ENCODE measurements at regions of chr12 and their contacts with region 1.

Region 1: GRCh38 chr12:48165094-48165981 is 8.0 kb upstream of the ASB8 start:
- DNase-seq: peak in 4 of 7 donors; percentile 28 to 59 (median 48)
- H3K4me3 ChIP-seq: no peak overlapping the region
- H3K27ac ChIP-seq: no peak overlapping the region
- H3K4me1 ChIP-seq: no peaks in the 10 kb centered on the region
- H3K27me3 ChIP-seq: no peaks in the 10 kb centered on the region
- CTCF ChIP-seq: peak; percentile 85 to 95 (median 90)
- POLR2A ChIP-seq: no peak

Region 2: DNA sequence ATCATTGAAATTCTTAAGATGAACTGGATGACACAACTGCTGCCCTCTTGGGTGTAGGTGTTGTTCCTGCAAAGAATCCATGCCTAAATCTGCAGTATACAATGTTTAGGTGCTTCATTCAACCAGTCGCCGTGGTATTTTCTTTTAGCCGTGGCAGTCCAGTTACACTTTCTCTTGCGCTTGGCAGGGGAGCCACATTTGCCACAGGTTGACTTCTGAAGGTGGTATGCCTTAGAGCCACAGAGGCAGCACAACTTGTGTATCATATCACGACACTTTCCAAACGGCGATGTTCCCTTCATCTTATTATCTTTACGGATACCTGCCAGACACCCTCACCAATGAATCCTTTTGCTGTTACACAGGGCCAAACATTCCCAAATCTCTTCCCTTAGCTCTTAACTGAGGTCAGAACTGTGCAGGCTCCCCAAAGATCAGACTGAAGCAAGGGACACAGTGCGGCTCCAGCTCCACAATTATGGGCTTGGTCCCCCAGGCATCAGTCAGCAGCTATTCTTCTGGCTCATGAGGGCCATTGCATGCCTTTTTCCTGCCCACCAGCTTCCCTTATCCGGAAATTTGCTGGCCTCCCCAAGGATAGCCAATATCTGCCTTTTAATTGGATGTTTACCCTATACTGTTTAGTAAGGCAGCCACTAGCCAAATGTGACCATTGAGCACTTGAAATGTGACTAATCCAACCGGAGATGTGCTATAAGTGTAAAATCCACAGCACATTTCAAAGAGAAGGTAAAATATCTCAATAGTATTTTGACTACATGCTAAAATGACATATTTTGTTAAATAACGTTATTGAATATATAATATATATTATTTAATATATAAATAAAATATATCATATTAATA is 110.2 kb before region 1 on chr12:
- intact Hi-C with region 1: no loop called
- DNase-seq: no peak
- H3K4me3 ChIP-seq: no peak overlapping the region
- H3K27ac ChIP-seq: no peak overlapping the region
- H3K4me1 ChIP-seq: peaks cover 0 to 6% of the 10 kb centered on the region in 2 donors
- H3K27me3 ChIP-seq: no peaks in the 10 kb centered on the region
- CTCF ChIP-seq: no peak
- POLR2A ChIP-seq: no peak

Region 3: DNA sequence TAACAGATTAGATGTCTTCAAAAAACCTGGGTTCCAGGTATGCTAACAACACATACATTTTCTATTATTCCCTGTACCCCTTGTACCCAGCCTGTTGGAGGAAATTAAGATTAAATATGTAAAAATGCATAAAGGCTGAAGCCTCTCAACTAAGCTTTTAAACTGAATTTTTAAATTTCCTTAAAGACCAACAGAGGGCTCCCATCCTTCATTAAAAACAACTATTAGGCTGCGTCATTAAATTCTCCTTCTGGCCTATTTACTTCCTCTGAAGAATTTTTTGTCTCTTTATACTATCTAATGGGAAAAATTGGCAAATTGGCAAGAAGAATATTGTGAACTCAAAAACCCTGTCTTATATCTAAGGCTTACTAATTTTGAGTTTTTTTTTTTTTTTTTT is 81.3 kb before region 1 on chr12:
- intact Hi-C with region 1: loop called in 1 of 2 experiments (anchors 5 kb)
- DNase-seq: no peak
- H3K4me3 ChIP-seq: no peak overlapping the region
- H3K27ac ChIP-seq: no peak overlapping the region
- H3K4me1 ChIP-seq: no peaks in the 10 kb centered on the region
- H3K27me3 ChIP-seq: no peaks in the 10 kb centered on the region
- CTCF ChIP-seq: peak; percentile 23 to 62 (median 50)
- POLR2A ChIP-seq: no peak

Region 4: GRCh38 chr12:48105862-48106680 is 59.3 kb before region 1 on chr12 and contains the start of gene SENP1:
- intact Hi-C with region 1: loop called in 1 of 2 experiments (anchors 10 kb)
- DNase-seq: peak; percentile 88 to 94 (median 90)
- H3K4me3 ChIP-seq: peak within 1 kb of the TSS; percentile 58 to 98 (median 72)
- H3K27ac ChIP-seq: peak within 1 kb of the TSS; percentile 73 to 95 (median 87)
- H3K4me1 ChIP-seq: peaks cover 7 to 18% of the 10 kb centered on the region in 2 donors
- H3K27me3 ChIP-seq: no peaks in the 10 kb centered on the region
- CTCF ChIP-seq: peak in 5 of 6 experiments; percentile 31 to 66 (median 43)
- POLR2A ChIP-seq: peak in 1 of 2 donors; percentile 41
- total RNA-seq, gene SENP1: 6.0 to 21.6 (median 12.9) TPM

Measured in adrenal gland (tissue), 19 donors.